CD8-positive, alpha-beta T cell (primary cell): ENCODE measurements at regions of chr15 and their contacts with region 1.

Region 1: DNA sequence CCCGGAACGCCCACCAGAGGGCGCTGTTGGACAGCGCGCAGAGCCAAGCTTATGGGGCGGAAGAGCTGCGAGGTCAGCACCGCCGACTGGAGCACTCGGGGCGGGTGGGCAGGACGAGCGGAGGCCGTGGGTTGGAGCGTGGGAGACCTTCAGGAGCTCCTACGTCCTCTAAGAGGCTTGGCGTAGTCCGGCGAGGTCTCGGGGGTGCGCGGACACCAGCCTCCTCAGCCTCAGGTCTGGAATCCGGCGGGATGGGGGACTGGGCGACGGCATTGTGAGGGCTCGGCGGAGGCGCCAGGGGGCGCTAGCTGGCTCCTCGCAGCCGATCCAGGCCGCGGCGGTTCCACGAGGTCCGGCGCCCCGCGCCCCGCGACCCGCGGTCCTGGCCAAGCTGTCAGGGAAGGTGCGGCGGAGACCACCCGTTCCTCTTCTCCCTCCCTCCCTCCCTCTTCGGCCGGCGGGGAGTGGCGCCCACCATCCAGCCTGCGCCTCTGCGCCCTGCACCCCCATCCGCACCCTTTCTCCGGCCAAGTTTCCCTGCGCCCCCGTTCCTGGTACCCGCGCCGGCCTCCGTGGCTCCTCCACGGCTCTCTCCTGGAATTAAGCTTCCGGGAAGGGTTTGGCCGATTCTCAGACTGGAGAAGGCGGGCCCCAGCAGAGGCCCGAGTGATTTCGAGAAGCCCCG is 24.3 kb upstream of the POLG start:
- DNase-seq: peak; percentile 71 to 90 (median 79)
- ATAC-seq: peak; percentile 87
- H3K4me3 ChIP-seq: peak overlapping the region; percentile 52 to 56
- H3K4me3 Mint-ChIP-seq: peak overlapping the region; percentile 81
- H3K27ac ChIP-seq: no peak overlapping the region
- H3K27ac Mint-ChIP-seq: no peak overlapping the region
- H3K4me1 ChIP-seq: peaks cover 8% of the 10 kb centered on the region
- H3K4me1 Mint-ChIP-seq: peaks cover 16% of the 10 kb centered on the region
- H3K27me3 ChIP-seq: peaks cover 46 to 55% of the 10 kb centered on the region in 2 experiments
- H3K27me3 Mint-ChIP-seq: peaks cover 77% of the 10 kb centered on the region
- CTCF ChIP-seq: peak; percentile 96

Region 2: DNA sequence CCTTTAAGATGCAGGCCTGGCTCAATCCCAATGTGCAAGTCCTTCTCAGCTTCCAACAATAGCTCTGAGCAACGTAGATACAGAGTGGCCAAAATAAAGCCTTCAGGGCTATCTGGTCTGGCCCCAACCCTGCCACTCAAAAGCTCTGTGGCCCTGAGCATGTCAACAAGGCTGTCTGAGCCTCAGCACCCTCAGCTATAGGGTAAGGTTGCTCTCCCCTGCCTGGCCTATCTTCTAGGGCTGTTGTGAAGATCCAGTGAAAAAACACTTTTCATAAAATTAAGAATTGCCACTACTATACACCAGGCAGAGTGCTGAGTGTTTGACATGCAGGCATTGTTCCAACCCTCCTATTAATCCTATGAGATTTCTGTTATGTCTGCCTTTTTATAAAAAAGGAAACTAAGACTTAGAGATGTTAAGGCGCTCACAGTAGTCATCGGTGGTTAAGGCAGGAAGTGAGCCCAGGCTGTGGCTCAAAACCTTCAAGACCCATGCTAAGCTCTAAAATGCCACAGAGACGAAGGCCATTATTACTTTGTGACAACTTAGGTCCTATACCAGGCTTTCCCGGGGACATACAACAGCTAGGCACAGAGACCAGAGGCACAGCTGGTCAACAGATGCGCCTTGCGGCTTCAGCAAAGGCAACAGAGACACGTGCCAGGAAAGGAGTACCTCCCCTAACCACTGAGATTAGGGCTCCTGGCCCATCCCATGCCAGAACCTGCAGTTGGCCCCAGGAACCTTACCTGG is 29.4 kb before region 1 on chr15:
- CTCF ChIA-PET with region 1: interaction called, 10 read pairs
- POLR2A ChIA-PET with region 1: no interaction called
- intact Hi-C with region 1: loop called in 1 of 2 experiments (anchors 1 kb)
- DNase-seq: peak in 8 of 9 experiments; percentile 24 to 71 (median 42)
- ATAC-seq: peak; percentile 29
- H3K4me3 ChIP-seq: peak overlapping the region in 1 of 2 experiments; percentile 10
- H3K4me3 Mint-ChIP-seq: peak overlapping the region; percentile 35
- H3K27ac ChIP-seq: peak overlapping the region in 1 of 2 experiments; percentile 71
- H3K27ac Mint-ChIP-seq: peak overlapping the region; percentile 34
- H3K4me1 ChIP-seq: peaks cover 61% of the 10 kb centered on the region
- H3K4me1 Mint-ChIP-seq: peaks cover 52% of the 10 kb centered on the region
- H3K27me3 ChIP-seq: no peaks in the 10 kb centered on the region
- H3K27me3 Mint-ChIP-seq: no peaks in the 10 kb centered on the region
- CTCF ChIP-seq: no peak

Region 3: DNA sequence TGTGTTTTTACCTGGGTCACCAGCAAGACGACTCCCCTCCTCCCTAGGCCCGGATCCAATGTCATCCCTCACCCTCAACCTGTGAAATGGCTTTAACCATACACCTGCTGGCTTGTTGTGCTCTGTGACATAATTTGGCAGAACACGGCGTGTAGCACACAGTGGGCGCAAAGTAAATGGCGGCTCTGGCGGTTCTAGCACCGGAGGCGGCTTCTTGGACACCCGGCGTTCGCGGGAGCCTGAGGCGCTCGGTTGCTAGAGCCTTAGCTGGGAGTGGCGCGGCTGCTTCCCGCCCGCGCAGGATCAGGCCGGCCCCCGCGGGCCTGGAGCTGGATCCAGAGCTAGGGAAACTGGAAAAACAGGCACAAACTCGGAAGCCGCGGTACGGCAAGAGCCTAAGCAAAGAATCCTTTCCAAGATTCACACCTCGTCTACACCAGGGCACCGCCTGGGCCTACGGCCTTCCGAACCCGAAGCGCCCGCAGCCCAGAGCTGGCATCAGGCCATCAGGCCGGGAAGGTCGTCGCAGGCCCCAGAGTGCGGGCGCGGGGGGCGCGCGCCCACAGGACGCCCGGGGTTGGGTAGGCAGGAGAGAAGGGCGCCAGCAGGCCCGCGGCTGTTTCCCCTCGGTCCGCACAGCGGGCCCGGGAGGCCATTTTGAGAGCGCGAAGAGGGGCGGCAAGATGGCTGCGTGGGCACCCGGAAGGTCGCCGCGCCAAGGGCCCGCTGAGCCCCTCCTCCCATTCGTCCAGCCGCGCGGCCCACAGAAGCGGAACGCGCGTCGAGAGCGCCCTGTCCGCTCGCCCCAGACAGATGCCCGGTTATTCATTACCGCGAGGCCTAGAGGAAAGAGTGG is 19.6 kb after region 1 on chr15:
- CTCF ChIA-PET with region 1: interaction called, 50 read pairs
- POLR2A ChIA-PET with region 1: no interaction called
- intact Hi-C with region 1: no loop called
- DNase-seq: peak in 4 of 9 experiments; percentile 26 to 61 (median 58)
- ATAC-seq: peak; percentile 47
- H3K4me3 ChIP-seq: peak overlapping the region; percentile 53 to 54
- H3K4me3 Mint-ChIP-seq: peak overlapping the region; percentile 78
- H3K27ac ChIP-seq: peak overlapping the region; percentile 32 to 48
- H3K27ac Mint-ChIP-seq: peak overlapping the region; percentile 67
- H3K4me1 ChIP-seq: peaks cover 13% of the 10 kb centered on the region
- H3K4me1 Mint-ChIP-seq: peaks cover 3% of the 10 kb centered on the region
- H3K27me3 ChIP-seq: peaks cover 16 to 23% of the 10 kb centered on the region in 2 experiments
- H3K27me3 Mint-ChIP-seq: peaks cover 56% of the 10 kb centered on the region
- CTCF ChIP-seq: no peak

Region 4: DNA sequence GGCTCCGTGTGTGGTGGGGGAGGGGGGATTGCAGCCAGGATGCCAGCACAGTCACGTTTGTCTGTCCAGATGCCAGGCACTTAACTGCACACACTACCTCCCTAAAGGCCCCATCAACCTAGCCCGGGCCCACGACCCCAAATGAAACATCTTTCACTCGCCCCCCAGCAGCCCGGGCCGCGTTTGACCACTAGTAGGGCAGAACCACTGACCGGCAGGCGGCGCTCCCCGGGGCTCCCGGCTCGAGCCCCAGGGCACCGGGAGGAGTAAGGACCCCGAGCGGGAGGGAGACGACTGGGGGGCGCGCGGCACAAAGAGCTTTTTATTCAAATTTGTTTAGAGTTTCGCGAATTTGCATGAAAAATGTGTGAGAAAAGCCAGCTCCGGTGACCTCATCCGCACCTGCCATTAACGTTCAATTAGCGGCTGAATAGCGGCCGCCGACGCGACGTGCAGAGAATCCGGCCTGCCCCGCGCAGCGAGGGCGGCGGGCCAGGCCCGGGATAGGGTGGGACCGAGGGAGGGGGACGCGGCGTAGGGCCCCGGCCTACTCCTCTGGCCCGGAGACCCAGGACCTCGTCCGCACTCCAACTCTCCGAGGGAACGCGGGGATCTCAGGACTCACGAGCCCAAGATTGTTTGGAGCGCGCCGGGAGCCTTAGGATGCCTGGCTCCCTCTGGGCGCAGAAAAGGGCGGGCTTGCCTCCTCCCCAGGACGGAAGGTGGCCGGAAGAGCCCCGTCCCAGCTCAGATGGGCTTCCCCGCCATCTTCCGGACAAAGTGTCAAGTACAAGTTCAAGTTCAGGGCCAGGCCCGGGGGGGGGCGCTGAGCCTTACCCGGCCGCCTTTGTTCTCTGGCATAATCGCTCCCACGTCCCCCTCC is 40.6 kb after region 1 on chr15:
- CTCF ChIA-PET with region 1: interaction called, 24 read pairs
- POLR2A ChIA-PET with region 1: no interaction called
- intact Hi-C with region 1: loop called in 1 of 2 experiments (anchors 1 kb)
- DNase-seq: peak in 5 of 9 experiments; percentile 21 to 72 (median 54)
- ATAC-seq: peak; percentile 59
- H3K4me3 ChIP-seq: peak overlapping the region; percentile 59 to 64
- H3K4me3 Mint-ChIP-seq: peak overlapping the region; percentile 78
- H3K27ac ChIP-seq: no peak overlapping the region
- H3K27ac Mint-ChIP-seq: no peak overlapping the region
- H3K4me1 ChIP-seq: peaks cover 13% of the 10 kb centered on the region
- H3K4me1 Mint-ChIP-seq: peaks cover 12% of the 10 kb centered on the region
- H3K27me3 ChIP-seq: peaks cover 8 to 25% of the 10 kb centered on the region in 2 experiments
- H3K27me3 Mint-ChIP-seq: peaks cover 62% of the 10 kb centered on the region
- CTCF ChIP-seq: no peak

Region 5: DNA sequence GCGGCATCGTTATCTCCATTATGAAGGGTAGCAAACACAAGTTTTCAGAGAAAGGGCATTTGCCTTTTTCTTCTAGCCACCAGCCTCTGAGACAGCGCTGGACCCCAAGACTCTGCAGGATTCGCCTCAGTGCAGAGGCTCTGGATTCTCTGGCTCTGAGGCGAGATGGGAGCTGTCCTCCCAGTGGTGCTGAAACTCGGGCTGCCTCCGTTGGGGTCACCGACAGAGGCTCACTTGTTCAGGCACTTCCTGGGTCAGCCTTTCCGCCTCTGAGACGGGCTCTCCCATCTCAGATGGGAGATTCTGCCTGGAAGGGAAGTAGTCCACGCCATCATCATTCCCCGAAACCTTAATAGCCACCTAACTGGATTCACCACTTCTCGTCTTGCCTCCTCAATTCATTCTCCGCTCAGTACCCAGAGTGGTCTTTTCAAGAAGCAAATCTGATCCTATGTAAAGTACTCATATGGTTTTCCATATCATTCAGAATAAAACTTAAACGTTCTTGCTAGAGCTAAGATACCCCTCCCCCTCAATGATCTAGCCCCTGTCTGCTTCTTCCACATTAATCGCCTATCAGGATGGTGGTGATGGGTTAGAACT is 60.6 kb after region 1 on chr15:
- CTCF ChIA-PET with region 1: interaction called, 24 read pairs
- POLR2A ChIA-PET with region 1: no interaction called
- intact Hi-C with region 1: loop called in 1 of 2 experiments (anchors 2 kb)
- DNase-seq: peak in 4 of 9 experiments; percentile 25 to 49 (median 44)
- ATAC-seq: peak; percentile 59
- H3K4me3 ChIP-seq: no peak overlapping the region
- H3K4me3 Mint-ChIP-seq: no peak overlapping the region
- H3K27ac ChIP-seq: no peak overlapping the region
- H3K27ac Mint-ChIP-seq: no peak overlapping the region
- H3K4me1 ChIP-seq: peaks cover 8% of the 10 kb centered on the region
- H3K4me1 Mint-ChIP-seq: peaks cover 8% of the 10 kb centered on the region
- H3K27me3 ChIP-seq: peaks cover 10 to 25% of the 10 kb centered on the region in 2 experiments
- H3K27me3 Mint-ChIP-seq: peaks cover 63% of the 10 kb centered on the region
- CTCF ChIP-seq: no peak

Region 6: GRCh38 chr15:89439764-89440163 is 80.9 kb after region 1 on chr15:
- CTCF ChIA-PET with region 1: interaction called, 24 read pairs
- POLR2A ChIA-PET with region 1: no interaction called
- intact Hi-C with region 1: no loop called
- DNase-seq: no peak
- ATAC-seq: no peak
- H3K4me3 ChIP-seq: no peak overlapping the region
- H3K4me3 Mint-ChIP-seq: no peak overlapping the region
- H3K27ac ChIP-seq: no peak overlapping the region
- H3K27ac Mint-ChIP-seq: no peak overlapping the region
- H3K4me1 ChIP-seq: no peaks in the 10 kb centered on the region
- H3K4me1 Mint-ChIP-seq: no peaks in the 10 kb centered on the region
- H3K27me3 ChIP-seq: no peaks in the 10 kb centered on the region
- H3K27me3 Mint-ChIP-seq: peaks cover 36% of the 10 kb centered on the region
- CTCF ChIP-seq: no peak